H1 (cell line): ENCODE measurements at regions of chr22 and their contacts with region 1.

Region 1: DNA sequence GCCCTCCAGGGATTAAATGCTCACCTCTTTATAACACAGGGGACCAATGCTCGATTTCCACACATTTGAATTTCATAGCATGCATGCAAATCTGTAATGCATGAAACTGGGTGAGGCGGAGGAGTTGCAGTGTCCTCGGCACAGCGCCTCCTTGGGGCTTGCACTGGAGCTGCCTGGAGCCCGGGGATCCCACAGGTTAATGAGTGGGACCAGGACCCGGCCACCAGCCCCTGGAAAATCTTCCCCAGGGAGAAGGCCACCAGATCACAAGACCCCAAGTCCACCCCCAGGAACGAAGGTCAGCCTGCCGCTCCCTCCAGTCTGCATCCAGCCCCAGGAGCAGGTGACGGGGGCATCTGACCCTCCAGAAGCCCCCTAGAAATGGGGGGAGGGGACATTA is 119.1 kb downstream of the MN1 start:
- DNase-seq: peak in 1 of 2 experiments; percentile 80
- H3K4me3 ChIP-seq: no peak overlapping the region
- H3K27ac ChIP-seq: no peak overlapping the region
- H3K4me1 ChIP-seq: peaks cover 0 to 10% (median 7%) of the 10 kb centered on the region in 4 experiments; a peak in 4 of 7 replicates
- H3K27me3 ChIP-seq: no peaks in the 10 kb centered on the region
- CTCF ChIP-seq: peak; percentile 67 to 95 (median 87)
- EP300 ChIP-seq: no peak
- POLR2A ChIP-seq: no peak
- RAD21 ChIP-seq: peak; percentile 63 to 74

Region 2: DNA sequence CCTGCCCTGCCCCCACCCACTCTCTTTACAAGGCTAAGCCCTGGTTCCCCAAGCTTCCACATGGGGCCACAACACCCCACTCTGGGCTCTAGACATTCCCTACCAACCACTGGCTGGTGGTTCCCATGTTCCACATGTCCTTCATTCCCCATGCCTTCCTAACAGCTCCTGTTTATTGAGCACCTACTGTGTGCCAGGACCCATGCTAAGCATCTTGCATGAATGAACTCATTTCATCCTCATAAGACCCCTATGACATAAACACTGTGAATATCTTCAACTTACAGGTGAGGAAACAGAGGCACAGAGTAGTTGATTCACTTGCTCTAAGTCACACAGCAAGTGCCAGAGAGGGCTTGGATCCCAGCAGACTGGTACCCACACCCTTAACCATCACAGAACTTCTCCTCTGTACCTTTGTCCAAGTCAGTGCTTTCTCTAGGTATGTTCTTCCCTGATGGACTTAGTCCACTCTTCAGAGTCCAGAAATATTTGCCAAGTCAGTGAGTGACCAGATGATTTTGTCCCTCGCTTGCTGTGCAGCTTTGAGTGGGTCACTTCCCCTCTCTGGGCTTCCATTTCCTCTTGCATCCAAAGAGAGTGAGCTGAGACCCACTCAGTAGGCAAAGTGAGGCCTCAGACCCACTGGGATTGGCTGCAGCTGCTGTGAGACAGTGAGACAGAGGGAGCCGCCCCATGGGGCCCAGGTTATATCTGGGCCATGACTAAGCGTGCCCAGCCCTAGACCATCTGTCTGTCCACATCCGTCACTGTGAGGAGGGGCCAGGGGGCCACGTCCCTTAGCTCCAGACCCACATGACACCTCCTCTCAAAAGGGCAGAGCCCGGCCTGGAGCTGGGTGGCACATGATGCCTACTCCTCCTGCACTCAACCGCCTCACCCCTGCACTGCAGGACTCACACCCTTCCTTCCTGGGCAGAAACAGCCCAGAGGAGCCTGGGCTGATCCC is 13.3 kb before region 1 on chr22:
- CTCF ChIA-PET with region 1: interaction called, 57 read pairs
- POLR2A ChIA-PET with region 1: interaction called, 15 read pairs
- DNase-seq: no peak
- H3K4me3 ChIP-seq: no peak overlapping the region
- H3K27ac ChIP-seq: 0 out of 2 replicates have a peak overlapping the region, but pooled peaks have one; percentile 17
- H3K4me1 ChIP-seq: peaks cover 8 to 23% (median 17%) of the 10 kb centered on the region in 4 experiments
- H3K27me3 ChIP-seq: no peaks in the 10 kb centered on the region
- CTCF ChIP-seq: no peak
- EP300 ChIP-seq: no peak
- POLR2A ChIP-seq: no peak
- RAD21 ChIP-seq: no peak

Region 3: GRCh38 chr22:27697888-27698287 is 15.5 kb after region 1 on chr22:
- CTCF ChIA-PET with region 1: interaction called, 27 read pairs
- POLR2A ChIA-PET with region 1: interaction called, 4 read pairs
- DNase-seq: no peak
- H3K4me3 ChIP-seq: no peak overlapping the region
- H3K27ac ChIP-seq: no peak overlapping the region
- H3K4me1 ChIP-seq: no peaks in the 10 kb centered on the region
- H3K27me3 ChIP-seq: no peaks in the 10 kb centered on the region
- CTCF ChIP-seq: no peak
- EP300 ChIP-seq: no peak
- POLR2A ChIP-seq: no peak
- RAD21 ChIP-seq: no peak

Region 4: DNA sequence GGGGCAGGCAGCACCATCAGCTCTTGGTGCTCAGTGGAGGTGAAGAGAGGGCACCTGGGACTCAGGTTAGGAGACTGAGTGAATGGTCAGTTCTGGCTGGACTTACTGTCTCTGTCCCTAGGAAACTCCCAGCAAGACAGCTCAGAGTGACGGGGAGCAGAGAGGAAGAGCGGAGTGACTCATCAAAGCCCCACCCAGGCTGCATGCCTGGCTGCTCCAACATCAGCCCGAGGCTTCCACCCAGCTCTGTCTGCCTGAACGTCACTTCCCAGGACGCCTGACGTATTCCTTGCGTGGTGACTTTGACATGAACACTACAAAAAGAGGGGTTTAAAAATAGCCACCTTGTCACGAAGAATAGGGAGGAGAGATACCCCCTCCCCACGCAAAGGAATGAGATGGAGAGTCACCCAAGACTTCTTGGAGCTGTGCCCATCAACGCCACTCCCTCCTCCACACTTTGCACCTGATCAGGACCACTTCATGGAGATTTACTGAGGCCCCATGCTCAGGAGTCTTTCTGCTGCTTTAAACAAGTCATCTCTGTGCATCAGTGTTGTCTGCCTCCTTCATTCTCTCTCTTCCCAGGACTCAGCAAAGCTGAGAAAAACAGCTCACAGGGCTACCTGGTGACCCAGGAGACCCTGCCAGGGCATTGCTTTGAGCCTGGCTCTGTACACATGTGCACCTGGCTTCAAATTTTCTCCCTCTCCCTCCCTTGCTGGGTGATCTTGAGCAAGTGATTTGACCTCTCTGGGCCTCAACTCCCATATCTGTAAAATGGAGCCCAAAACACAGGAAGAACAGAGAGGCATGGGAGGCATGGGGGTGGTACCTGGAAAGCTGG is 36.0 kb after region 1 on chr22:
- CTCF ChIA-PET with region 1: interaction called, 10 read pairs
- POLR2A ChIA-PET with region 1: interaction called, 5 read pairs
- DNase-seq: no peak
- H3K4me3 ChIP-seq: no peak overlapping the region
- H3K27ac ChIP-seq: no peak overlapping the region
- H3K4me1 ChIP-seq: peaks cover 0 to 9% (median 4%) of the 10 kb centered on the region in 4 experiments; a peak in 6 of 7 replicates
- H3K27me3 ChIP-seq: no peaks in the 10 kb centered on the region; a peak in 1 of 7 replicates
- CTCF ChIP-seq: no peak
- EP300 ChIP-seq: no peak
- POLR2A ChIP-seq: no peak
- RAD21 ChIP-seq: no peak